Right lobe of liver (tissue), 6 donors: ENCODE measurements at regions of chr6 and their contacts with region 1.

Region 1: GRCh38 chr6:100126790-100127484 is 132.9 kb upstream of the MCHR2 start:
- DNase-seq: no peak
- ATAC-seq: no peak
- H3K4me3 ChIP-seq: no peak overlapping the region
- H3K27ac ChIP-seq: no peak overlapping the region
- H3K4me1 ChIP-seq: peaks cover 0 to 2% (median 0%) of the 10 kb centered on the region in 4 donors
- H3K27me3 ChIP-seq: no peaks in the 10 kb centered on the region
- CTCF ChIP-seq: no peak
- POLR2A ChIP-seq: no peak

Region 2: GRCh38 chr6:100479179-100480035 is 352.5 kb after region 1 on chr6:
- intact Hi-C with region 1: loop called in 1 of 2 experiments (anchors 10 kb)
- DNase-seq: no peak
- ATAC-seq: peak; percentile 27 to 41 (median 37)
- H3K4me3 ChIP-seq: no peak overlapping the region
- H3K27ac ChIP-seq: no peak overlapping the region
- H3K4me1 ChIP-seq: peaks cover 0 to 23% (median 7%) of the 10 kb centered on the region in 4 donors
- H3K27me3 ChIP-seq: no peaks in the 10 kb centered on the region
- CTCF ChIP-seq: peak; percentile 64 to 79 (median 72)
- POLR2A ChIP-seq: no peak

Region 3: GRCh38 chr6:100512203-100512862 is 385.4 kb after region 1 on chr6:
- intact Hi-C with region 1: no loop called
- DNase-seq: no peak
- ATAC-seq: no peak
- H3K4me3 ChIP-seq: no peak overlapping the region
- H3K27ac ChIP-seq: no peak overlapping the region
- H3K4me1 ChIP-seq: no peaks in the 10 kb centered on the region
- H3K27me3 ChIP-seq: no peaks in the 10 kb centered on the region
- CTCF ChIP-seq: no peak
- POLR2A ChIP-seq: no peak